Activated naive CD4-positive, alpha-beta T cell treated with anti-CD3 and anti-CD28 coated beads for 36 hours (primary cell): ENCODE measurements at regions of chr7 and their contacts with region 1.

Region 1: DNA sequence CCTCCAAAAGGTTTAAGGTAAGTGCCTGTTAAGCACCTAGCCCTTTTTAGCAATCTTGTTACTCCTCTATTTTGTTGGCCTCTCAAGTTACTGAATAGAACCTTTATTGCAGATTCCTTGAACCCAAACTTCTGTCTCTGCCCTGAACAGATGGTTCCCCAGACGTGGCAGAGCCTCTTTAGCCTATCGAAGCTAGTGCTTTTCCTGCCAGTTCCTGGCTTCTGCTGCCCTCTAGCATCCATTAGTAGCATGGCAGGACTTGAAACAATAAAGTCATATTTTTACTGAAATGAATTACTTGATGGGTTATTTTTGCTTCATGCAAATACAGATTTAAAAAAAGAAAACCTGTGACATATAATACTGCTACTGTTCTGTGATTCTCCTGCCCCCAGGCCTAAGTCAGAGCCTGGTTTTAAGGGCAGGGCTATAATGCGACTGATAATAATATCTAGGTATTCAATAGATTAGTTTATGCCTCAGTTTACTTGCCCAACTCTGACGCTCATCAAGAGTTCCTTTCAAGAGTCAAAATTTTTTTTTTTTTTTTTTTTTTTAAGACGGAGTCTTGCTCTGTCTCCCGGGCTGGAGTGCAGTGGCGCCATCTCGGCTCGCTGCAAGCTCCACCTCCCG is 84.3 kb upstream of the PHF14 start:
- DNase-seq: peak; percentile 57
- H3K4me3 Mint-ChIP-seq: no peak overlapping the region
- H3K27ac Mint-ChIP-seq: no peak overlapping the region
- H3K4me1 Mint-ChIP-seq: peaks cover 10% of the 10 kb centered on the region
- H3K27me3 Mint-ChIP-seq: no peaks in the 10 kb centered on the region

Region 2: DNA sequence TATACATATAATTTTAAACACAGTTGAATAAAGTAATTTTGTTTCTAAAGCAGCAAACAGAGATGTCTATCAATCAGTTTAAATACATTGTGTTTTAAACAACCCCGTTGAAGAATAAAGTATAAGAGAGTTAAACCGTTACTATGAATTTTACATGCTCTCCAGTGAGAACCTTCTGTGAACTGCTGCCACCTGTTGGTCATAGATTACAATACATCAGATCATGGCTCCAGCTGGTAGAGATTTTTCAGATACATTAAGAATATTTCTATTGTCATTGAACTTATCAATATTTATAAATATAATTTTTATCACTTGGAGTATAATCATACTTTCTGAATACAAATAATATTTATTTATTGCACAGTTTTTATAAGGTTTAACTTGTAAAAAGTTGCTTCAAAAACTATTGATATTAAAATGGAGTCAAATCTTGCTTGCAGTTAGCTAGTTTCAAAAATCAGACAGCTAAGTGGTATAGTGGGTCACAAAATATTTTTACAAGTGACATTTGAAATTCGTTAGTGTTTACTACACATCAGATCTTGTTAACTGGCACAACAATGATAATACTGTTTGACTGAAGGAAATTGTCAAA is 476.9 kb before region 1 on chr7:
- CTCF ChIA-PET with region 1: interaction called, 3 read pairs
- intact Hi-C with region 1: loop called (anchors 1 kb)
- DNase-seq: peak; percentile 29
- H3K4me3 Mint-ChIP-seq: no peak overlapping the region
- H3K27ac Mint-ChIP-seq: no peak overlapping the region
- H3K4me1 Mint-ChIP-seq: no peaks in the 10 kb centered on the region
- H3K27me3 Mint-ChIP-seq: no peaks in the 10 kb centered on the region

Region 3: DNA sequence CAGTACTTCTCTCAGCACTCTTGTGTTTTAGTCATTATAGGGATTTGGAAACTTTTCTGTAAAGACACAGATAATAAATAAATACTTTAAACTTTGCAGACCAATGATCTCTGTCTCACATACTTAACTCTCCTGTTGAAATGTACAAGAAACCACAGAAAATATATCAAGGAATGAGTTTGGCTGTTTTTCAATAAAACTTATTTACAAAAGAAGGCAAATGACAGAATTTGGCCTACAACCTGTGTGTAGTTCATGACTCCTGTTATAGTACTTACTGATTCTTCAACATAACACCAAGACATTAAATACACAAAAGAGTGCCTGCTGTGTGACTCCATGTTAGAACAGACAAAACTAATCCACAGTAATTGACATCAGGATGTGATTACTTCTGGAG is 425.7 kb before region 1 on chr7:
- CTCF ChIA-PET with region 1: no interaction called
- intact Hi-C with region 1: no loop called
- DNase-seq: no peak
- H3K4me3 Mint-ChIP-seq: no peak overlapping the region
- H3K27ac Mint-ChIP-seq: no peak overlapping the region
- H3K4me1 Mint-ChIP-seq: no peaks in the 10 kb centered on the region
- H3K27me3 Mint-ChIP-seq: no peaks in the 10 kb centered on the region

Region 4: DNA sequence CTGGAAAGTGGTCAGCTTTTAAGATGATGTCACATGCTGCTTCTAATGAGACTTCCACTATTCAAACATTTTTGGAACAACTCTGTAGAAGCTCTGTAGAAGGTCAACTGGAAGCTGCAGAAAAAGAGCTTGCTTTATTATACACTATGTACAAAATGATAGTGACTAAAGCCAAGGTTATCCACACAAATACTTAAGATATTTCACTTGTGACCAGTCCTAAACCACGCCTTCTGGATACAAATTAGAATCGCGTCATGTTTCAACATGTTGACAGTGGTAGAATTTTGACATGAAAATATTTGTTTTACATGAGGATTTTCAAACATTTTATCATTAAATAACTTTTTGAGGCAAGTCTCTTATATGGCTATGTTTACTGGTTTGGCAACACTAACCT is 415.3 kb before region 1 on chr7:
- CTCF ChIA-PET with region 1: no interaction called
- intact Hi-C with region 1: loop called (anchors 10 kb)
- DNase-seq: no peak
- H3K4me3 Mint-ChIP-seq: no peak overlapping the region
- H3K27ac Mint-ChIP-seq: no peak overlapping the region
- H3K4me1 Mint-ChIP-seq: no peaks in the 10 kb centered on the region
- H3K27me3 Mint-ChIP-seq: no peaks in the 10 kb centered on the region

Region 5: DNA sequence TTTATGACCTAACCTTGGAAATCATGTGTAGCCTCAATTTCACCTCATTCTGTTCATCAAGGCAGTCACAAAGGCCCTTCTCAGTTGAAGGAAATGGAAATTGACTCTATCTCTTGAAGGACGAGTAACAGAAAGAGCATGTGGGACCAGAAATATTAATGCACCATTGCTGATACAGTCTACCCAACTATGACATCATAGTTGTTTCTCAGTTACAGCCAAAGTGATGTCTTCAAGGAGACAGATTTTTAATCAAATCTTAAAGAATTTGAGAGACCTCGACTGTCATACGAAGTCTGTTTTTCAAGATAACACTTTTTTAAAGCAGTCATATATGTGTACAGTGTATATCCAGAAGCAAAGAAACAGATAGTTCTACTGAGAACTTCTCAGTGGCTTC is 251.4 kb before region 1 on chr7:
- CTCF ChIA-PET with region 1: no interaction called
- intact Hi-C with region 1: loop called (anchors 1 kb)
- DNase-seq: no peak
- H3K4me3 Mint-ChIP-seq: no peak overlapping the region
- H3K27ac Mint-ChIP-seq: no peak overlapping the region
- H3K4me1 Mint-ChIP-seq: no peaks in the 10 kb centered on the region
- H3K27me3 Mint-ChIP-seq: no peaks in the 10 kb centered on the region

Region 6: DNA sequence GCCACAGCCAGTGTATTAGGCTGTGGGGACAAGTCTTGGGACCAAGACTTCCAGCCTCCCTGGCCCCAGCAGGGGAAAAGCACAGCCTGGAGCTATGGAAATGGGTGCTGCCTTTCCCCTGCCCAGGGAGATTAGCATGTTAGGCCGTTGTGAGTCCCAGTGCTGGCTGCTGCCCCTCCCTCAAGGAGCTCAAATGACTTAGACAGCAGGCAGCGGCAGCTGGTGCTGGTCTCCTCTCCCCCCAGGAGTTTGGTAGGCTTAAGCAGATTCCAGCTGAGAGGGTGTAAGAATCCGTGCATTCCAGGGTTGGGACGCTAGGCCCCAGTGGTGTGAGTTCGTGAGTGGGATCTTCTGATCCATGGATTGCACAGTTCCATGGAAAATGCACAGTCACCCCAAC is 217.2 kb before region 1 on chr7:
- CTCF ChIA-PET with region 1: no interaction called
- intact Hi-C with region 1: no loop called
- DNase-seq: no peak
- H3K4me3 Mint-ChIP-seq: no peak overlapping the region
- H3K27ac Mint-ChIP-seq: no peak overlapping the region
- H3K4me1 Mint-ChIP-seq: no peaks in the 10 kb centered on the region
- H3K27me3 Mint-ChIP-seq: no peaks in the 10 kb centered on the region

Region 7: GRCh38 chr7:11343818-11344413 is 454.5 kb after region 1 on chr7:
- CTCF ChIA-PET with region 1: no interaction called
- intact Hi-C with region 1: loop called (anchors 1 kb)
- DNase-seq: no peak
- H3K4me3 Mint-ChIP-seq: no peak overlapping the region
- H3K27ac Mint-ChIP-seq: no peak overlapping the region
- H3K4me1 Mint-ChIP-seq: peaks cover 4% of the 10 kb centered on the region
- H3K27me3 Mint-ChIP-seq: peaks cover 10% of the 10 kb centered on the region